Activated CD4-positive, alpha-beta memory T cell treated with anti-CD3 and anti-CD28 coated beads for 36 hours (primary cell): ENCODE measurements at regions of chr20 and their contacts with region 1.

Region 1: DNA sequence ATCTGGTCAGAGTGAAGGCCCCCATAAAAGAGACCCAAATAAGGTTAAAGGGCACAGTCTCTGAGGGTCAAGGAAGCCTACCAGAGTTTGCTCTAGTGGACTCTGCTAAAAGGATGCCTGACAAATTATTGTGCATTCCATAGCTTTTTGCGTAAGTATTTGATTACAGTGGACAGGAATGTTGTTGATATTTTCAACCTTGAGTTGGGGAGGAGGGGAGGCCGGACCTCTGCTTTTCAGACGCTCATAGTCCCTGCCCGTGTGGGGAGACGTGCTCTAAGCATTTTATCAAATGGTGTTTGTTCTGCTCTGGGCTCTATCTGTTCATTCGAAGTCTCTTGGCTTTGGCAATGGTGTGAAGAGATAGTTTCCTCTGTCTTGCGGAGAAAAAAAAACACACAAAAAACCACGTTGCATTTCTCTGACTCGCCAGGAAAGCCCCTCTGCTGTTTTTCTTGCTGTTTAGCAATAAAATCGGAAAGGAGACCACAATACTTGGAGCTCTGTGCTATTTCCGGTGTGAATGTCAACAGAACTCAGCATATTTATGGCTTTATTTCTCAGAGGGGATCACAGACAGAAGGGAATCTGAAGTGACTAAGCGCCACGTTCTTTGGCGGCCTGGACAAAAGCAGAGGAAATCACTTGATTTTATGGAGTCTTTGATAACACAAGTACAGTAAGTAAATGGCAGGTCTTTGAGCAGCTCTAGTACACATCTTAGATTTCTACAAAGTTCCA is 159.8 kb downstream of the ZFP64 start:
- DNase-seq: peak; percentile 22
- H3K4me3 Mint-ChIP-seq: no peak overlapping the region
- H3K27ac Mint-ChIP-seq: peak overlapping the region; percentile 19
- H3K4me1 Mint-ChIP-seq: peaks cover 15% of the 10 kb centered on the region
- H3K27me3 Mint-ChIP-seq: no peaks in the 10 kb centered on the region

Region 2: DNA sequence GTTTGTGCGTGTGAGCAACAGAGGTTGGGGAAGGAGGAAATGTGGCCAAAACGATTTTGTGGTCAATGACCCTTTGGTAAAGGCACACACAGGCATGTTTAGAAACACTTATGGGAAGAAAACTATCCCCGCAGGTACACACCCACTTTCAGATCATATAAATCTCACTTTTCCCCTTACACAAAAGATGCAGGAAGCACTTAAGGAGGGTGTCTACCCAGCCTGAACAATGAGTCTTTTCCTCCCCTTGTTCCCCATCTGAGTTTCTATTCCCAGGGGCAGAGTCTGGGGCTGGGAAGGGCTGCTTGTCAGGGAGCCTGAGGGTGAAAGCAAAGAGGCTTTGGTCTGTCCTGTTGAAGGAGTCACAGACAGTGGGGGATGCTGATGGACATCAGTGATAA is 36.2 kb before region 1 on chr20:
- CTCF ChIA-PET with region 1: no interaction called
- POLR2A ChIA-PET with region 1: no interaction called
- intact Hi-C with region 1: no loop called
- DNase-seq: no peak
- H3K4me3 Mint-ChIP-seq: no peak overlapping the region
- H3K27ac Mint-ChIP-seq: no peak overlapping the region
- H3K4me1 Mint-ChIP-seq: no peaks in the 10 kb centered on the region
- H3K27me3 Mint-ChIP-seq: peaks cover 4% of the 10 kb centered on the region

Region 3: GRCh38 chr20:52047811-52048764 is 16.4 kb after region 1 on chr20:
- CTCF ChIA-PET with region 1: interaction called, 3 read pairs
- POLR2A ChIA-PET with region 1: no interaction called
- intact Hi-C with region 1: loop called (anchors 2 kb)
- DNase-seq: peak; percentile 54
- H3K4me3 Mint-ChIP-seq: no peak overlapping the region
- H3K27ac Mint-ChIP-seq: no peak overlapping the region
- H3K4me1 Mint-ChIP-seq: peaks cover 23% of the 10 kb centered on the region
- H3K27me3 Mint-ChIP-seq: peaks cover 4% of the 10 kb centered on the region